ENCODE measurements at regions of chr10 and their contacts with region 1.

Region 1: DNA sequence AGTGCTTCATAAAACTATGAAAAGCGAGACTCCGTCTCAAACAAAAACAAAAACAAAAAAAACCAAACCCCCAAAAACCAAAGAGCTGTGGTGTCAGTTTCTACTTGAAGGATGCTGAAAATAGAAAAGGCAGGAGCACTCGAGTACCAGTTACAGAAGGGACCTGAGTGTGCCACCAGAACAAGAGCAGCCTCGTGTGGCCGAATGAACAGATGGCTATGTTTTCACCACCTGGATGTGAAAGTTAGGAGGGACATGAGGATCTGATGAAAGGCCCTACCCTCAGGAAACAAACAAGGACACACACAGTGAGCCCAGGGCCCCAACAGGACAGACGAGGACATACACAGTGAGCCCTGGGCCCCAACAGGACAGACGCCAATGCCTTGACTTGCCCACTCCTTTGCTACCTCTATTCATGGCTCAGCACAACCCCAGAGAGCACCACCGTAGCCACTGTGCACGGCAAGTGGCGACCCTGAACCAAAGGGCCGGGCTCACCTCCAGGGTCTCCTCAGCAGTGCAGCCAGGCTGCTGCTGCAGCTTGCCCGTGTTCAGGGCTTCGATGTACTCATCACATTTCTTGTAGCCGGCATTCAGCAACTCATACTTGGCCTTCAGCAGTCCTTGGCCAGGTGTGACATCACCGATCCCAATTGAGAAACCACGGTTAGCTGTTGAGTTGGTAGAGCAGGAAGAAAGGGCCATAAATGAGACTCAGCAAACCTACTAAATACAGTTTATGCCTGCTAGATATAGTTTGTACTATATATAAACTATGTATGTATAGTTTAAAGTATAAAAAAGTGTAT is 24.9 kb downstream of the POLR3A start:
- DNase-seq: no peak
- H3K4me3 ChIP-seq: no peak overlapping the region
- H3K27ac ChIP-seq: no peak overlapping the region
- H3K27me3 ChIP-seq: no peaks in the 10 kb centered on the region
- CTCF ChIP-seq: no peak

Region 2: GRCh38 chr10:77949167-77949566 is 55.3 kb before region 1 on chr10:
- CTCF ChIA-PET with region 1: no interaction called
- POLR2A ChIA-PET with region 1: interaction called, 12 read pairs
- DNase-seq: no peak
- H3K4me3 ChIP-seq: no peak overlapping the region
- H3K27ac ChIP-seq: peak overlapping the region; percentile 65
- H3K27me3 ChIP-seq: peaks cover 4% of the 10 kb centered on the region
- CTCF ChIP-seq: no peak

Region 3: DNA sequence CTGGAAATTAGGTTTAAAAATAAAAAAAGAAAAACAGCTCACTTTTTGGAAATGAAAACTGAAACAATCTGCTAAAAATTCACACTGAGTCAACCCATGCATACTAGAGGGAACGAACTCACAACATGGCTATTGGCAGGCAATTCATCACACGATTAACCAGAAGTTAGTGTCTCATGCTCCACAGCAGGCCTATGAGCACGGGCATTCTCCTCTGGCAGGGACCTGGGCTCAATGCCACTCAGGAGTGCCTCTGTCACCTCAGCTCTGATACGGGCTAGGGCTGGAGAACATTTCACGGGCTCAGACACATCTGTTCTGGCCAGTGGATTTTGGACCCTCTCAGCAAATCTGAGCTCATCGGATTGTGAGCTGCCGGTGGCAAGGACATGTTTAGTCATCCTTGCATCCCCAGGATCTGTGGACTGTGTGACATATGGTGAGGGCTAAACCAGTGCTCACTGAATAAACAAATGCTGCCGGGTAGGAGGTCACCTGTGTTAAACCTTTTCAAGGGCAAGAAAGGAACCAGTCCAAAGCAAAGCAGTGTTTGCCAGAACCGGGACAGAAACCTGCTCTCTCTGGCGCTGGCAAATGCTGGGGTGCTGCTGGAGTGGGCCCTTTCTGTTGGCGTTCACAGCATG is 15.2 kb before region 1 on chr10:
- CTCF ChIA-PET with region 1: no interaction called
- POLR2A ChIA-PET with region 1: no interaction called
- DNase-seq: no peak
- H3K4me3 ChIP-seq: no peak overlapping the region
- H3K27ac ChIP-seq: no peak overlapping the region
- H3K27me3 ChIP-seq: no peaks in the 10 kb centered on the region
- CTCF ChIP-seq: no peak

Region 4: GRCh38 chr10:78890506-78890905 is 886.1 kb after region 1 on chr10:
- CTCF ChIA-PET with region 1: no interaction called
- POLR2A ChIA-PET with region 1: no interaction called
- DNase-seq: no peak
- H3K4me3 ChIP-seq: no peak overlapping the region
- H3K27ac ChIP-seq: no peak overlapping the region
- H3K27me3 ChIP-seq: peaks cover 61% of the 10 kb centered on the region
- CTCF ChIP-seq: no peak

Measured in AG04450 (cell line).